H1 (cell line): ENCODE measurements at regions of chr17 and their contacts with region 1.

Region 1: GRCh38 chr17:76458580-76459490 is 5.9 kb upstream of the UBE2O start:
- DNase-seq: peak; percentile 79 to 83
- H3K4me3 ChIP-seq: no peak overlapping the region
- H3K27ac ChIP-seq: no peak overlapping the region
- H3K4me1 ChIP-seq: peaks cover 0 to 8% (median 3%) of the 10 kb centered on the region in 4 experiments; a peak in 4 of 7 replicates
- H3K27me3 ChIP-seq: no peaks in the 10 kb centered on the region
- CTCF ChIP-seq: peak; percentile 66 to 86 (median 85)
- EP300 ChIP-seq: no peak
- POLR2A ChIP-seq: no peak
- RAD21 ChIP-seq: peak; percentile 68 to 78

Region 2: GRCh38 chr17:76252040-76252954 is 206.5 kb before region 1 on chr17:
- CTCF ChIA-PET with region 1: no interaction called
- POLR2A ChIA-PET with region 1: no interaction called
- DNase-seq: no peak
- H3K4me3 ChIP-seq: no peak overlapping the region
- H3K27ac ChIP-seq: no peak overlapping the region
- H3K4me1 ChIP-seq: no peaks in the 10 kb centered on the region
- H3K27me3 ChIP-seq: no peaks in the 10 kb centered on the region; a peak in 1 of 7 replicates
- CTCF ChIP-seq: no peak
- EP300 ChIP-seq: no peak
- POLR2A ChIP-seq: no peak
- RAD21 ChIP-seq: no peak

Region 3: DNA sequence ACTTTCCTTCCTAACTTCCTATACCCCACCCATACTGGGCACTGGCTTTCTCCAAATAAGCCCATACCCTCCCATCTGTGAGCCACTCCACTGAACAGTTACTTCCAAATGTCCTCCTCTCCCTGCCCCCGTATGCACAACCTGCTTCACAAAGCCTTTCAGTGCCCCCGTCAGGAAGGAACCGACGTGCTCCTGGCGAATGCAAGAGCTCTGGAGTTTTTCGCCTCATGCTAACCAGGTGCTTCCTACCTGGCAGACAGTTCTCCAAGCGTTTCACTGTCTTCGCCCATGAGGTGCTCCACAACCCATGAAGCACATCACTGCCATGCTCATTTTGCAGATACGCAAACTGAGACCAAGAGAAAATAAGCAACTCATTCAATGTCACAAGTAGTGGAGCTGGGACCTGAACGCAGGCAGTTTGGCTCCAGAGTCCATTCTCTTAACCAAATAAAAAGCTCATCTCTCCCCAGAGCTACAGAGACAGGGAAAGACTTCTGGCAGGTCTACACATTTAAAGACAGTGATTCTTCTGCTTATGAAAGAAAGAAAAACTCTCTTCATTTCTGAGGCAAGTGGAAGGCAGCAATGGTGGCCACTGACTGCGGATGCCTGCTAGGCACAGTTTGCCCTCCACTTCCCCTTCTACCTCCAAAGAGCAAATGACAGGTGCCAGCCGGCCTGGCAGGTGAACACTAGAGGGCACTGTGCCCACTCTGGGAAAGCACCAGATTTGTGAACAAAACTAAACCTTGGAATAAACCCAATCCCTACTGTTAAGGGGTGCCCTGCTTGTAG is 50.6 kb before region 1 on chr17:
- CTCF ChIA-PET with region 1: interaction called, 197 read pairs
- POLR2A ChIA-PET with region 1: interaction called, 7 read pairs
- DNase-seq: peak in 1 of 2 experiments; percentile 88
- H3K4me3 ChIP-seq: no peak overlapping the region
- H3K27ac ChIP-seq: no peak overlapping the region
- H3K4me1 ChIP-seq: no peaks in the 10 kb centered on the region; a peak in 2 of 7 replicates
- H3K27me3 ChIP-seq: no peaks in the 10 kb centered on the region
- CTCF ChIP-seq: peak; percentile 83 to 88 (median 87)
- EP300 ChIP-seq: no peak
- POLR2A ChIP-seq: no peak
- RAD21 ChIP-seq: peak; percentile 80 to 83

Region 4: DNA sequence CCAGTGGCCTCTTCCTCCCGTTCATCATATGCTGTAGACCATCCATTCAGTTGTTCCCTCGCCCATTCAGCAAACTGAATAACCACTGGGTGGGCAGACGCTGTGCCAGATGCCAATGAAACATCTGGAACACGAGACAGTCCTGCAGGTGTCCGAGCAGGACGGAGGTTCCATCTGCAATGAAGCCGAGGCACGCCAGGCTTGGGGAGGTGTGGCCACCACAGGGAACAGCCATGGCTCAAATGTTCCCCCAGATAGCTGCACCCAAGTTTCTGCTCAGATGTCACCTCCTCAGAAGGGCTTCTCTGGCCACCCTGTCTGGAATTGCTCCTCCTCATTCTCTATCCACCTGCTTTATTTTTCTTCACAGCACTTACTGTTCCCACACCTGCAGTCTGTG is 36.4 kb before region 1 on chr17:
- CTCF ChIA-PET with region 1: interaction called, 22 read pairs
- POLR2A ChIA-PET with region 1: no interaction called
- DNase-seq: no peak
- H3K4me3 ChIP-seq: no peak overlapping the region
- H3K27ac ChIP-seq: no peak overlapping the region; the same call in 1 of the 2 replicates
- H3K4me1 ChIP-seq: peaks cover 0 to 8% (median 5%) of the 10 kb centered on the region in 4 experiments; a peak in 6 of 7 replicates
- H3K27me3 ChIP-seq: no peaks in the 10 kb centered on the region
- CTCF ChIP-seq: no peak
- EP300 ChIP-seq: peak in 1 of 2 experiments; percentile 53; a peak in 1 of 3 replicates
- POLR2A ChIP-seq: no peak
- RAD21 ChIP-seq: no peak

Region 5: DNA sequence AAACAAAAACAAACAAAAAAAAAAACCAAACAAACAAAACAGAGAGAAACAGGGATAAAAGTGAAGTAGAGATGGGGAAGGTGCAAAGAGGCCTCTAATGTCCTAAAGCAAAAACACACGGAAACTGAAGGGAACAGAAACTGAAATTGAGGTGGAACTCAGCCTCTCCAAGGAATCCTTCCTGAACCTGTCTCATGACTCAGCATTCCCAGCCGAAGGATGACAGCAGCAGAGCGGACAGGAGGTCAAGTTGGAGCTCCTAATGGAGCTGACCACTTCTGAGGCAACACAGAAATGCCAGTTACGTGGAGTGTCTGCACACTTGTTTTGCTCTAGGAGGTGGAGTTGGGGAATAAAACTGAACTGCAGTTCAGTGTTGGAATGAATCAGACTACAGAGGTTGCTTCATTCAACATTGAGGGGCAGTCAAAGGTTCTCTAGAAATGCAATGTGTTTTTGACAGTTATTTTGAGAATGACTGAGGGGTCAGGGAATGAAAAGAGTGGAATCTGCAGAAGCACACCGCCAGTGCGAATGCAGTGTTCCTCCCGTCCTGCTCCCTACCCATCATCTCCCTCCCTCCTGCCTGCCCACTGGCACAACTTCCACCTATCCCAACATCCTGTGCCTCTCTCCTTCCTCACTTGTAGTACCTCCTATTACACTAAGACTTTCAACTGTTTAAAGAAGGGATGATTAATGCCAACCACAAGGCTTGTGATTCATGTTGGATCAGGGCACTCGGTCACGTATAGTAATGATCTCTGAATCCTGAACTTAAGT is 12.2 kb before region 1 on chr17:
- CTCF ChIA-PET with region 1: interaction called, 20 read pairs
- POLR2A ChIA-PET with region 1: interaction called, 6 read pairs
- DNase-seq: no peak
- H3K4me3 ChIP-seq: peak overlapping the region in 1 of 4 experiments; percentile 31; a peak in 3 of 8 replicates
- H3K27ac ChIP-seq: no peak overlapping the region
- H3K4me1 ChIP-seq: peaks cover 33 to 63% (median 58%) of the 10 kb centered on the region in 4 experiments
- H3K27me3 ChIP-seq: no peaks in the 10 kb centered on the region
- CTCF ChIP-seq: no peak
- EP300 ChIP-seq: no peak
- POLR2A ChIP-seq: no peak
- RAD21 ChIP-seq: no peak

Region 6: DNA sequence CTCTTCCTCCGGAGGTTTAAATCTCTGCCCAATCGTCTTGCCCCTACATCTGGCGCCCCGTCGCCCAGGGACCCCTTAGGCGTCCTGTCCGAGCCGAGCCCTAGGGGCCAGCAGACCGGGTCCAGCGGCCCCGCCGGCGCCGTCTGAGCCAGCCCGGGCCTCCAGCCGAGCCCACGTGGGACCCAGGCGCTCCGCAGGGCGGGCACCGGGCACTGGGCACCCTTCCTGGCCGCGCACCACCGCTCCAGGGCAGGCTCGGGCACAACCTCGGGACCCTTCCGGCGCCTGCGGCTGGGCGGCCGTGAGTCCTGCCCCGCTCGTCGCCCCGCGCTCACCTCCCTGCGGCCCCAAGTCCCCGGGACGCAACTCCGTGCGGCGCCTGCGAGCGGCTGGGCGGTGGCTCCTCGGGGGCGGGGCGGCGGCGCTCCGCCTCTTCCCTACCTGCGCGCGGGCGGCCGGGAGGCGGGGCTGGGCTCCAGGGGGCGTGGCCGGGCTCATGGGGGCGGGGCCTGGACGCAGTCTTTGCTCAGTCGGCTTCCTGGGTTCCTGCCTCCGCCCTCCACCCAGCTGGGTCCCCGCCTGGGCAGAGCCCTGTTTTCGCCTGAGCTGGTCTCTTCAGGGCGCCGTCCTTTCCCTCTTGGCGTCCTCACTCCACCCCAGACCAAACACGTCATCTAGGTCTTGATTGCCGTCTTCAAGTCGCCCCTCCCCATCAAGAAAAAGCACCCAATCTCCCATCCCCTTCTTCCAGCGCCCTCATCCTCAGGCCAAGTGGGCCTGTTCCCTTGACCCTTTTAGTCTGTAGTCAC is 42.4 kb after region 1 on chr17 and contains the start of gene RHBDF2:
- CTCF ChIA-PET with region 1: interaction called, 446 read pairs
- POLR2A ChIA-PET with region 1: interaction called, 3 read pairs
- DNase-seq: peak; percentile 65 to 100
- H3K4me3 ChIP-seq: peak within 1 kb of the TSS; percentile 62 to 82 (median 76)
- H3K27ac ChIP-seq: no peak within 1 kb of the TSS
- H3K4me1 ChIP-seq: peaks cover 11 to 43% (median 34%) of the 10 kb centered on the region in 4 experiments
- H3K27me3 ChIP-seq: no peaks in the 10 kb centered on the region
- CTCF ChIP-seq: no peak
- EP300 ChIP-seq: no peak
- POLR2A ChIP-seq: peak in 1 of 2 experiments; percentile 71; a peak in 2 of 3 replicates
- RAD21 ChIP-seq: no peak
- total RNA-seq, gene RHBDF2: 25.9 and 26.2 TPM in 2 replicates

Region 7: DNA sequence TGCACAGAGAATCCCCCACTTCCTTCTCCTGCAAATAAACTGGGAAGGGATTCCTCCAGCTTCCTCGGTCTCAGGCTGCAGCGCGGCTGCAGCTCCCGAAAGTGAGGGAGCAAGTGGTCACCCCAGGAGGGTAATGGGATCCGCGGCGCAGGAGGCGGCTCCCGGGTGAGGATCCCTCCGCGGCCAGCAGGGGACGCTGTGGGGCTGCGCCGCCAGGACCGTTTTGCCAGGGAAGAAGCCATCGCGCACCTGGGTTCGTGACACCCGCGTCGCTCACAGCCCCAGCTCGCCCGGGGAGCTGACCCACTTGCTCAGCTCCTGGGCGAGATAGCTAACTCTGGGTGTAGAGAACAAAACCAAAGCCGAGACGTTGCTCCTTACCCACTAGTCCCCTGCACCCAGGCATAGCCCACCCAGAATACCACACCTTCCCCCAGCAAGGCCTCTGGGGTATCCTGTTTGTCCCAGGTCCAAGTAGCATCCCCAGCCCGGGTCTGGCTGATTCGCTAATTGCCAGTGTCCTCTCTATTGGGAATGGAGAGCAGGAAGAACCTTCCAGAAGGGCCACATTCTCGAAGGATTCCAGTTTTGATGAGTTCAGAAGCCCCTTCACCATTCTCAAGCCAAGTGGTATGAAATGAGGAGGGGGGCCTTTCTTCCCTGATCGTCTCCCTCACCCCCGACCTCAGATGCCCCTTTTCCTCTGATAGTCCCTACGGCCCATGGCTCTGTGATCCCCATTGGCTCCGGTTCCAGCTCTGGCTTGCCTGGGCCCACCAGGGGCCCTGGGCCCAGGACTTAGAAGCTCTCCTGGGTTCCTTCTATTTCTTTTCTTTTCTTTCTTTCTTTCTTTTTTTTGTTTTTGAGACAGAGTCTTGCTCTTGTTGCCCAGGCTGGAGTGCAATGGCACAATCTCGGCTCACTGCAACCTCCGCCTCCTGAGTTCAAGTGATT is 64.5 kb after region 1 on chr17:
- CTCF ChIA-PET with region 1: interaction called, 22 read pairs
- POLR2A ChIA-PET with region 1: no interaction called
- DNase-seq: peak; percentile 49 to 96
- H3K4me3 ChIP-seq: no peak overlapping the region
- H3K27ac ChIP-seq: no peak overlapping the region
- H3K4me1 ChIP-seq: peaks cover 0 to 19% (median 10%) of the 10 kb centered on the region in 4 experiments; a peak in 6 of 7 replicates
- H3K27me3 ChIP-seq: peaks cover 0 to 5% (median 0%) of the 10 kb centered on the region in 4 experiments; a peak in 3 of 7 replicates
- CTCF ChIP-seq: peak; percentile 97 to 99 (median 99)
- EP300 ChIP-seq: peak in 1 of 2 experiments; percentile 43; a peak in 1 of 3 replicates
- POLR2A ChIP-seq: no peak
- RAD21 ChIP-seq: peak; percentile 91 to 92

Region 8: GRCh38 chr17:76643553-76644148 is 184.8 kb after region 1 on chr17 and contains the start of gene ST6GALNAC1:
- CTCF ChIA-PET with region 1: no interaction called
- POLR2A ChIA-PET with region 1: no interaction called
- DNase-seq: no peak
- H3K4me3 ChIP-seq: no peak within 1 kb of the TSS
- H3K27ac ChIP-seq: no peak within 1 kb of the TSS
- H3K4me1 ChIP-seq: peaks cover 0 to 5% (median 3%) of the 10 kb centered on the region in 4 experiments; a peak in 3 of 7 replicates
- H3K27me3 ChIP-seq: no peaks in the 10 kb centered on the region
- CTCF ChIP-seq: no peak
- EP300 ChIP-seq: no peak
- POLR2A ChIP-seq: no peak
- RAD21 ChIP-seq: no peak
- total RNA-seq, gene ST6GALNAC1: not detected in 2 replicates